Endothelial cell of umbilical vein (primary cell): ENCODE measurements at regions of chr9 and their contacts with region 1.

Region 1: DNA sequence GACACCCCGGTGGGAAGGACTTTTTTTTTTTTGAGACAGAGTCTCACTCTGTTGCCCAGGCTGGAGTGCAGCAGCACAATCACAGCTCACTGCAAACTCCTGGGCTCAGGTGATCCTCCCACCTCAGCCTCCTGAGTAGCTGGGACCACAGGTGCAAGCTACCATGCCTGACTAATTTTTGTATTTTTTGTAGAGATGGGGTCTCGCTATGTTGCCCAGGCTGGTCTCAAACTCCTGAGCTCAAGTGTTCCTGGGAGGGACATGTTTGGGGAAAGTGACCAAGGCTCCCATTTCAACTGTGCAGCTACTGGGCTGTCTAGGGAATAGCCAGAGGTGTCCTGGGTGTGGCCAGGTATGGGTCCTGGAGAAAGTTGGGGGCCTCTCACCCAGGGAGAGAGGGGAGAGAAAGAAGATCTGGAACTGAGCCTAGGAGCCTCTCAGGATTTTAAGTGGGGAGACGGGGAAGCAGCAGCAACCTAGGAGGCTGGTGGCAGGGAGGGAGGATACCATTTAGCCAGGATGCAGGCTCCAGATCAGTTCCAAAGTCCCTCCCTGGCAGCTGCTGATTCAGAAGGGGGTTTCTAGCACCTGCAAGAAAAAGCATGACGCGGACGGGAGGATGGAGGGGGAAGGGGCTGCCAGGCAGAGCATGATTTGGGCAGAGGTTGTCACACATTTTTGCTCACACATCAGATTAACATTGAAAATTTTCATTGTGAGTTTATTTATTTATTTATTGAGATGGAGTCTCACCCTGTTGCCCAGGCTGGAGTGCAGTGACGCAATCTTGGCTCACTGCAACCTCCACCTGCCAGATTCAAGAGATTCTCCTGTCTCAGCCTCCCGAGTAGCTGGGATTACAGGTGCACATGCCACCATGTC is 6.7 kb upstream of the TOR1B start:
- DNase-seq: no peak
- H3K4me3 ChIP-seq: no peak overlapping the region
- H3K27ac ChIP-seq: no peak overlapping the region
- H3K4me1 ChIP-seq: no peaks in the 10 kb centered on the region
- H3K27me3 ChIP-seq: peaks cover 0 to 5% of the 10 kb centered on the region in 2 experiments
- CTCF ChIP-seq: no peak
- POLR2A ChIP-seq: no peak

Region 2: DNA sequence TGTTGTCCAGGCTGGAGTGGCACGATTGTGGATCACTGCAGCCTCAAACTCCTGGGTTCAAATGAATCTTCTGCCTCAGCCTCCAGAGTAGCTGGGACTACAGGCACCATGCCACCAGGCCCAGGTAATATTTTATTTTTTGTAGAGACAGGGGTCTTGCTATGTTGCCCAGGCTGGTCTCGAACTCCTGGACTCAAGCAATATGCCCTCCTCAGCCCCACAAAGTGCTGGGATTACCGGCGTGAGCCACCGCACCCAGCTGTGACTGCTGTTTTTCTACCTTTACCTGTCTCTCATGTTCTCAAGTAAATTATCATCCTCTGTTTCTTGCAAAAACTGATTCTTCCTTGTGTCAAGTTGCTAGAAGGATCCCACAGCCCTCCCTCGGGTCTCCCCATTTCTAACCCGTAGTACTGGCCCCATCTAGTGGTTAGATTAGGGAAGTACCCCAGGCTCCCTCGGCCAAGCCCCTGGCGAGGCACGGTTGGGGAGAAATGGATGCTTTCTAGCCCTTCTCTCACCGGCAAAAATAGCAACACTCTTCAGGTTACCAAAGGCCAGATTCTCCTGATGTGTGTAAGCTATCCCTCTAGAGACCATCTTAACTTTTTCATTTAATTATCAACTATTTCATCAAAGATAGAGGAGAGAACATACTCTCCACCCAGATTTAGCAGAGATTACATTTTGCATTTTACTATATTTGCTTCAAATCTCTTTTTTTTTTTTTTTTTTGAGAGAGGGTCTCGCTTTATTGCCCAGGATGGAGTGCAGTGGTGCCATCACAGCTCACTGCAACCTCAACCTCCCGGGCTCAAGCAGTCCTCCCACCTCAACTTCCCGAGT is 12.5 kb before region 1 on chr9:
- CTCF ChIA-PET with region 1: interaction called, 10 read pairs
- POLR2A ChIA-PET with region 1: no interaction called
- dilution Hi-C with region 1: no loop called
- intact Hi-C with region 1: no loop called
- DNase-seq: peak; percentile 62
- H3K4me3 ChIP-seq: no peak overlapping the region
- H3K27ac ChIP-seq: no peak overlapping the region
- H3K4me1 ChIP-seq: no peaks in the 10 kb centered on the region
- H3K27me3 ChIP-seq: peaks cover 0 to 2% of the 10 kb centered on the region in 2 experiments
- CTCF ChIP-seq: peak; percentile 81 to 84
- POLR2A ChIP-seq: no peak